Left colon (tissue), 2 donors: ENCODE measurements at regions of chr17 and their contacts with region 1.

Region 1: DNA sequence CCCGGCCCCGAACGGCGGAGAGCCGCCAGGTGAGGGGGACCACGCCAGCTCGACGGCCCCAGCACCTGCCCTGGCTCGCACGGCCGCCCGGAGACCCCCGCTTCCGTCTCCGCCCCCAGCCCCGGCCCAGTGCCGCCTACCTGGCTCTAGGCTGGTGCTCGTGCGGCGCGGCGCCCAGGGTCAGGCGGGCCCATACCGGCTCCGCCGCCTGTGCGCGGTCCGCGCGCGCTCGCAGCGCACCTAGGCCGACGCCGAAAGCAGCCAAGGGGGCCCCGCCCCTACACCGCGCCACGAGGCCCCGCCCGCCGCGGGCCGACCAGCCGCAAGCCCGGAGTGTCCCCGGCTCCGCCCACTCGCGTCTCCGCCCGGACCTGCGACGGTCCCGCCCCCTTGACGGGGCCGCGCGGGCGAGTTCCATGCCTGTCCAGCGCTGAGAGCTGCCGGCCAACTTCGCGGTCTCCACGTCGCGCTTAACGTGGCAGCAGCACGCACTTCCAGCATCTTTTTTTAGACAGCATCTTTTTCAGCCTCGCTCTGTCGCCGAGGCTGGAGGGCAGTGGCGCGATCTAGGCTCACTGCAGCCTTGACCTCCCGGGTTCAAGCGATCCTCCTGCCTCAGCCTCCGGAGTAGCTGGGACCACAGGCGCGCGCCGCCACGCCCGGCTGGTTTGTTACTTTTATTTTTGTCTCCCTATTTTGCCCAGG is at the start of gene SLC25A39:
- DNase-seq: peak; percentile 92 to 95
- ATAC-seq: peak; percentile 76
- total RNA-seq, gene SLC25A39: 137 to 148 TPM

Region 2: DNA sequence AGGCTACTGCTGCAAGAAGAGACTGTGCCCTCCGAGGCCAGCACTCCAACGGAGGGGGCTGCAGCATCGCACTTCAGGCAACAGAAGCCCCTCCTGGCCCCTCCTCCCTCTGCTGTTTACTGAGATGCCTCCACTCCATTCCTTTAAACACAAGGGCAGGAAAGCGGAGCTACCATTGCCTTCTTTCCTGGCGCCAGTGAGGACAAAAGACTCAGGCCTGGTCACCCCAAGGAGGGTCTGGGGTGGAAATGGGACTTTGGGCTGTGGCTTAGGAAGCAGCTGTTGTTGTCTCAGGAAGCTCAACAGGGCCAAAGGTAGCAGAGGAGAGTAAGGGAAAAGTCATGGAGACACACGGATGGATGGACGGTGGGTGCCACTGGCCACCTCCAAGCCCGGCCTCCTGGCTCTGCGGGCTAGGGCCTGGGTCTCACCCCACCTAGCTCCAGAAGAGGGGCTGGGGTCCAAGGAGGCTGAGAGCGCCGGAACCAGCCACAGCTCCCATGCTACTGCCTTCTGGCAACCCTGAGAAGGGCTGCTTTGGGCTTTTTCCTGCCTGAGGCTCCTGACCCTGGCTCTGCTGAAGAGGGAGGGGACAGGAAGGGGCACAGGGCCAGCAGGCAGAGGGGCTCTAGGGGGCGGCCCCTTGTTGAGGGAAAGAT is 466.7 kb before region 1 on chr17:
- intact Hi-C with region 1: no loop called
- DNase-seq: no peak
- ATAC-seq: no peak

Region 3: DNA sequence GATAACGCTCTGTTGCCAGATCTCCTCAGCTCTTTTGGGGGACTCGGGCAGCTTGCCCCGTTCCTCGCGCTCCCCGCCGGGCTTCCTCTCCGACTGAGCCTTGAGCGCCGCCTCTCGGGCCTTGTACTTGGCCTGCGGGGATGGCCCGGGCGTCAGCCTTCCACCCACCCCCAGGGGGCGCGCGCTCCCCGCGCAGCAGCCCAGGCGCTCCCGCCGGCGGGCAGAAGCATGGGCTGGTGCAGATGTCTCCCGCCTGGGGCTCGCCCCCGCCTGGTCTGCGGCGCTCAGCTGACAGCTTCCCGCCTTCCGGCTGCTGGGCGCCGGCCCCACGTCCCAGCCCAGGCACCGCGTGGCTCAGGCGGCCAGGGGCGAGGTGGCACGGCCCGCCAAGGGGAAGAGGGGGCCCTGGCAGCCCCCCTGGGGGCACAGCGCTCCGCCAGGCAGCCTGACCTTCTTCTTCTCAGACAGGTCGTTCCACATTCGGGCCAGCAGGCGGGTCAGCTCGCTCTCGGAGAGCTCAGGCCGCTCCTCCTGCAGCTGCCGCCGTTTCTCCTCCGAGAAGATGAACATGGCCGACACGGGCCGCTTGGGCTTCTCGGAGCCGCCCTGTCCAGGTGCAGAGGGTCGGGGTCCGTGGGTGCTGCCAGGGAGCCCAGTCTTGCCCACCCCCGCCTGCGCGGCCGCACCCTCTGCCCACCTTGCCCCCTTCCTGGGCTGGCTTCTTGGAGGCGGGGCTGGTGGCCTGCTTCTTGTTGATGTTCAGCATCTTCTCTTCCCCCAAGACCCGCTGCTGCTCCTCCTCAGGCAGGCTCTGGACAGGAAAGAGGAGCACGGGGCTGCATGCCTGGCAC is 114.2 kb before region 1 on chr17:
- intact Hi-C with region 1: loop called in 1 of 2 experiments (anchors 5 kb)
- DNase-seq: peak; percentile 83 to 93
- ATAC-seq: peak; percentile 87

Region 4: DNA sequence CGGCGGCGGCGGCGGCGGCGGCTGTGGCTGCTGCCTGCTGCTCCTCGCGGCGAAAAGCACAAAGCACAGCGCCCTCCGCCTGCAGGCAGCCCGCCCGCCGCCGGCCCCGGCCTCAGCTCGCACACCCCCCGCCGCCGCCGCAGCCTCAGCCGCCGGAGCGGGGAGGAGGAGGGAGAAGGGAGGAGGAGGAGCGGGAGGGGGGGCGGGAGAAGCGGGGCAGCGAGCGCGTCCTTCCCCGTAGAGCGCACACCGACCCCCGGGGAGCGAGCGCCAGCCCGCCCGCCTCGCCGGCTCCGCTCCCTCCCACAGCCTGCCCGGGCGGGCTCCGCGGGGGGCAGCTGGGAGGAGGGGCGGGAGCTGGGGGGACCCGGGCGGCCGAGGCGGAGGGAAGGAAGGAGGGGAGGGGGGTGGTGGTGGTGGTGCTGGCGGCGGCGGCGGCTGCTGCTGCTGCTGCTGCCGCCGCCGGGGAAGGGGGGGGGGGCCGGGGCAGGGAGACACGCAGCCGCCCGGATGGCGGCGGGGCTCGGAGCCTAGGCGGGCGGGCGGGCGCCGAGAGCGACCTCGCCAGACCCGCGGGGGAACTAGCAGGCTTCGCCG is 105.0 kb before region 1 on chr17 and contains the start of gene UBTF:
- intact Hi-C with region 1: loop called (anchors 5 kb)
- DNase-seq: peak; percentile 65 to 70
- ATAC-seq: peak; percentile 4
- total RNA-seq, gene UBTF: 61.1 to 69.6 TPM